HEK293 (cell line): ENCODE measurements at regions of chr5 and their contacts with region 1.

Region 1: DNA sequence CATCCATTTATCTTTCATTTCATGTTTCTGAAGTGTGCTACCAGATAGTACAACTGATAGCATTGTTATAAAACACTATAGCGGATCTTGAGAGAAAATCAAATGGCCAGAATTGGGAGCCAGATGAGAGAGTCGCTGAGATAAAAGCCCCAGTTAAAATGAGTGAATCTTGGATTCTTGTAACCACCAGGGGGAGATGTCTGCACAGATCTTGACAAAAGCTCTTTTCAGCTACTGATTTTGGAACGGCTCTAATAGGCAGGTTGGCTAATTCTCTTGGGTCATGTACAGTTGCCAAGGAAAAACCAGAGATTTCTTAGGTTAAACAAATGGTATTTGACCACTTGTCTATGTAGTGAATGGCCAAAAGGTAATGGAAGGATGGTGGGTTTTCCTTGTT is 21.7 kb downstream of the F2RL2 start:
- H3K4me3 ChIP-seq: no peak overlapping the region
- H3K27ac ChIP-seq: no peak overlapping the region
- H3K4me1 ChIP-seq: no peaks in the 10 kb centered on the region
- CTCF ChIP-seq: no peak

Region 2: DNA sequence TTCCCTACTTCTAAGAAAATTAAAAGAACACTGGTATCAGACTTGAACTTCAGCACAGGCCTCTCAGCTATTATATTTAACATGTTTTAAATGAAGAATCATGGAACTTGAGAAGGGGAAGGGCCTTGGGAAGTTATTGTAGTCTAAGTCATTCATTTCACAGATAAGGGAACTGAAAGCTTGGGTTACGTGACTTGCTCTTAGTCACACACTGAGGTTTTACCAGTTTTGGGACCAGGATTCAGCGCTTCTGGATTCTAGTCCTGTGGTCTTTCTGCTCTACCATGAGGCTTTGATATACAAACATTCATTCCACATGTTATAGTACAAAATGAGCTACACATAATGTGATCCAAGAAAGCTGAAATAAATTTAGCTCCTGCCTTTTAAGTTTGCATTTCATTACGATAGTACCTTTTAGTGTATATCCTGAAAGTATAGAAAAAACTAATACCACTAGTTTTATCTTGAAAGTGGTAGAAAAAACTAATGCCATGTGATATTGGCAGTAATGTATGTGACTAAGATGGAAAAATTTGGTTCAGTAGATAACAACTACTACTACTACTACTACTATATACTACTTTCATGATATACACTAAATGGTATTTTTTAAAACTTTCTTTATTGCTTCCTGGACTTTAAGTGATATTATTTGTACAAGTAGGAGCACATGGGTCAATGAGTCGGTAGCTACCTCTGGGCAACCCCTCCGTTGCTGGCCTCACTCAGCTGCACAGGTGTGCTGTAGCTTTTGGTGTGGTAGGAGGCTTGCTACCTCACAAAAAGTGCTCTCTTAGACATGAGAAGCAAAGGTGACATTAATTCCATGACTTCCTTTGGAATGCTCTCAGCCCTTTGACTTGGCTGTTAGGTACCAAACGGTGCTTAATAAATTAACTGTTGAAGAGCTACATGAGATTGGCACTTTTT is 19.0 kb before region 1 on chr5:
- CTCF ChIA-PET with region 1: interaction called, 10 read pairs
- POLR2A ChIA-PET with region 1: no interaction called
- H3K4me3 ChIP-seq: no peak overlapping the region
- H3K27ac ChIP-seq: no peak overlapping the region
- H3K4me1 ChIP-seq: peaks cover 12% of the 10 kb centered on the region; the same call in 1 of the 2 replicates
- CTCF ChIP-seq: no peak